HCT116 (cell line): ENCODE measurements at regions of chr5 and their contacts with region 1.

Region 1: DNA sequence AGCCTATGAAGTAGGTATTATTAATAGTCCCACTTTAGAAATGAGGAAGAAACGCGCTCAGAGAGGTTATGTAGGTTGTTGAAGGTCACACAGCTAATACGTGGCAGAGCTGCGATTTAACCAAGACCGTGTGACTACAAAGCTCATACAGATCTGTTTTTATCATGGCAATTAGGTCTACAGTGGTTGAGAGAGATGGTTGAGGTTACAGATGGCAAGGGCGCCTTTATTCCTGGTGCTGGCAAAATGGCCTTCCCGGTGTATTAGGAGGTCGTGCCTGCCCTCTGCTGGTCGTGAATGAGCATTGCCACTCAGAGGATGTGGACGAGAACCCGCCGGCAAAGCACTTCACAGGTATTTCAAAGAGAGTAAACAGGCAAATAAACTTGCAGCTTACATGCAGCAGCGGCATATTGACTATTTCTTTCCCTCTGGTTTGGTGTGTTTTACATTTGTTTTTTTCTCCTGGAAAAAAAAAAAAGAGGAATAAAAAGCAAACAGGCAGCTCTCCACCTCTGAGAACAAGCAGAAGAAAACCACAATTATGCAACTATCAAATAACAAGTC is 65.3 kb upstream of the EGFLAM start:
- DNase-seq: peak; percentile 42
- ATAC-seq: peak; percentile 88
- H3K4me3 ChIP-seq: no peak overlapping the region
- H3K27ac ChIP-seq: no peak overlapping the region
- H3K4me1 ChIP-seq: no peaks in the 10 kb centered on the region
- H3K27me3 ChIP-seq: peaks cover 7% of the 10 kb centered on the region; the same call in 1 of the 2 replicates
- CTCF ChIP-seq: peak; percentile 76 to 92 (median 85)
- POLR2A ChIP-seq: no peak
- RAD21 ChIP-seq: peak; percentile 86

Region 2: GRCh38 chr5:36734422-36734821 is 1458.7 kb before region 1 on chr5:
- CTCF ChIA-PET with region 1: interaction called, 3 read pairs
- POLR2A ChIA-PET with region 1: no interaction called
- RAD21 ChIA-PET with region 1: no interaction called
- intact Hi-C with region 1: loop called (anchors 5 kb)
- DNase-seq: no peak
- ATAC-seq: peak; percentile 81
- H3K4me3 ChIP-seq: no peak overlapping the region
- H3K27ac ChIP-seq: no peak overlapping the region
- H3K4me1 ChIP-seq: peaks cover 0 to 2% of the 10 kb centered on the region in 2 experiments; a peak in 2 of 4 replicates
- H3K27me3 ChIP-seq: no peaks in the 10 kb centered on the region
- CTCF ChIP-seq: peak in 2 of 3 experiments; percentile 11 to 39; a peak in 1 of 6 replicates
- POLR2A ChIP-seq: no peak
- RAD21 ChIP-seq: peak; percentile 57

Region 3: GRCh38 chr5:37412515-37413277 is 780.4 kb before region 1 on chr5:
- CTCF ChIA-PET with region 1: interaction called, 20 read pairs
- POLR2A ChIA-PET with region 1: no interaction called
- RAD21 ChIA-PET with region 1: interaction called in 1 of 2 experiments, 5 read pairs
- intact Hi-C with region 1: loop called (anchors 1 kb)
- DNase-seq: peak; percentile 69
- ATAC-seq: peak; percentile 83
- H3K4me3 ChIP-seq: no peak overlapping the region
- H3K27ac ChIP-seq: no peak overlapping the region
- H3K4me1 ChIP-seq: peaks cover 10 to 12% of the 10 kb centered on the region in 2 experiments
- H3K27me3 ChIP-seq: no peaks in the 10 kb centered on the region
- CTCF ChIP-seq: peak; percentile 89 to 99 (median 97)
- POLR2A ChIP-seq: no peak
- RAD21 ChIP-seq: peak; percentile 90

Region 4: GRCh38 chr5:37495210-37495609 is 697.9 kb before region 1 on chr5:
- CTCF ChIA-PET with region 1: no interaction called
- POLR2A ChIA-PET with region 1: no interaction called
- RAD21 ChIA-PET with region 1: no interaction called
- intact Hi-C with region 1: loop called (anchors 5 kb)
- DNase-seq: no peak
- ATAC-seq: peak; percentile 54; the same call in 1 of the 2 replicates
- H3K4me3 ChIP-seq: no peak overlapping the region
- H3K27ac ChIP-seq: peak overlapping the region; percentile 10; the same call in 1 of the 2 replicates
- H3K4me1 ChIP-seq: peaks cover 13 to 22% of the 10 kb centered on the region in 2 experiments; a peak in 3 of 4 replicates
- H3K27me3 ChIP-seq: no peaks in the 10 kb centered on the region
- CTCF ChIP-seq: peak in 2 of 3 experiments; percentile 19 to 40; a peak in 3 of 6 replicates
- POLR2A ChIP-seq: no peak
- RAD21 ChIP-seq: peak; percentile 54

Region 5: GRCh38 chr5:37722236-37723146 is 470.6 kb before region 1 on chr5:
- CTCF ChIA-PET with region 1: no interaction called
- POLR2A ChIA-PET with region 1: no interaction called
- RAD21 ChIA-PET with region 1: no interaction called
- intact Hi-C with region 1: loop called (anchors 5 kb)
- DNase-seq: peak; percentile 40
- ATAC-seq: peak; percentile 86
- H3K4me3 ChIP-seq: no peak overlapping the region
- H3K27ac ChIP-seq: no peak overlapping the region
- H3K4me1 ChIP-seq: peaks cover 7 to 22% of the 10 kb centered on the region in 2 experiments
- H3K27me3 ChIP-seq: no peaks in the 10 kb centered on the region
- CTCF ChIP-seq: no peak
- POLR2A ChIP-seq: no peak
- RAD21 ChIP-seq: no peak

Region 6: GRCh38 chr5:37837414-37838032 is 355.6 kb before region 1 on chr5:
- CTCF ChIA-PET with region 1: interaction called, 8 read pairs
- POLR2A ChIA-PET with region 1: no interaction called
- RAD21 ChIA-PET with region 1: no interaction called
- intact Hi-C with region 1: loop called (anchors 1 kb)
- DNase-seq: peak; percentile 18
- ATAC-seq: peak; percentile 92
- H3K4me3 ChIP-seq: no peak overlapping the region
- H3K27ac ChIP-seq: no peak overlapping the region
- H3K4me1 ChIP-seq: peaks cover 2 to 6% of the 10 kb centered on the region in 2 experiments; a peak in 2 of 4 replicates
- H3K27me3 ChIP-seq: no peaks in the 10 kb centered on the region
- CTCF ChIP-seq: peak; percentile 69 to 82 (median 70)
- POLR2A ChIP-seq: no peak
- RAD21 ChIP-seq: peak; percentile 89

Region 7: DNA sequence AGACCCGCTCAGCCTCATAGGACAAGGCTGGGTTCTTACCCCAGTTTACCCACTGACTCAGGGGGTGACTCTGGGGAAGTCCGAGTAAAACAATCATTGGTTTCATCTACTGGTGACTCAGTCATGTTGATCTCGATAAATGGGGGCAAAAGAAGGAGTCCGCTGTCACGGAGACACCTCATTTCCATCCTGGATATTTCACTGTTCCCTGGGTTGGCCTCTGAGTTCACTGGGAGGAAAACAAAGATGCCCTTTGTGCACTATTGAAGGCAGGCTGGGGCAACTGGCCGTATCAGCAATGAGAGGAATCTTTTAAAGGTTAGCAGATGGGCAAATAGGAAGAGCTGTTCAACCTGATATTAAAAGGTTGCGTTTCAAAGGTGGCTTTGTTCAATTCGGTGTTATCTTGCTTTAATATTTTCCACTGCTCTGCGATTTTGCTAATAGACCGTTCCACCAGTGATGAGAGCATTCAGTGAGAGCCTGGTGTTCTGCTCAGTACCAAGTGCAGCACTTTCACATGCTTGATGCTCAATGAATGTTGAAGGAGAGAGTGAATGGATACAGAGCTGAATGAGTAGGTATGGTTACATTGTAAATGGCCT is 45.0 kb before region 1 on chr5:
- CTCF ChIA-PET with region 1: no interaction called
- POLR2A ChIA-PET with region 1: no interaction called
- RAD21 ChIA-PET with region 1: no interaction called
- intact Hi-C with region 1: no loop called
- DNase-seq: no peak
- ATAC-seq: no peak
- H3K4me3 ChIP-seq: no peak overlapping the region
- H3K27ac ChIP-seq: no peak overlapping the region
- H3K4me1 ChIP-seq: no peaks in the 10 kb centered on the region
- H3K27me3 ChIP-seq: peaks cover 38% of the 10 kb centered on the region
- CTCF ChIP-seq: no peak
- POLR2A ChIP-seq: no peak
- RAD21 ChIP-seq: no peak

Region 8: GRCh38 chr5:38497946-38498345 is 304.8 kb after region 1 on chr5:
- CTCF ChIA-PET with region 1: no interaction called
- POLR2A ChIA-PET with region 1: no interaction called
- RAD21 ChIA-PET with region 1: no interaction called
- intact Hi-C with region 1: no loop called
- DNase-seq: peak; percentile 12
- ATAC-seq: peak; percentile 75
- H3K4me3 ChIP-seq: no peak overlapping the region
- H3K27ac ChIP-seq: no peak overlapping the region
- H3K4me1 ChIP-seq: peaks cover 0 to 8% of the 10 kb centered on the region in 2 experiments; a peak in 2 of 4 replicates
- H3K27me3 ChIP-seq: no peaks in the 10 kb centered on the region
- CTCF ChIP-seq: peak in 2 of 3 experiments; percentile 17 to 33; a peak in 3 of 6 replicates
- POLR2A ChIP-seq: no peak
- RAD21 ChIP-seq: peak; percentile 48